ENCODE measurements at regions of chr9 and their contacts with region 1.

Region 1: GRCh38 chr9:37415011-37415719 is 7.3 kb upstream of the GRHPR start:
- DNase-seq: no peak
- ATAC-seq: peak; percentile 50
- H3K4me3 ChIP-seq: no peak overlapping the region
- H3K27ac ChIP-seq: peak overlapping the region; percentile 45
- H3K4me1 ChIP-seq: peaks cover 46% of the 10 kb centered on the region
- H3K27me3 ChIP-seq: no peaks in the 10 kb centered on the region
- CTCF ChIP-seq: peak; percentile 82 to 89 (median 88)
- EP300 ChIP-seq: no peak
- POLR2A ChIP-seq: no peak
- RAD21 ChIP-seq: peak; percentile 80

Region 2: GRCh38 chr9:37066139-37066725 is 348.9 kb before region 1 on chr9:
- CTCF ChIA-PET with region 1: no interaction called
- POLR2A ChIA-PET with region 1: no interaction called
- RAD21 ChIA-PET with region 1: no interaction called
- SMC1A ChIA-PET with region 1: no interaction called
- in situ Hi-C with region 1: no loop called
- intact Hi-C with region 1: no loop called
- DNase-seq: no peak
- ATAC-seq: peak; percentile 93
- H3K4me3 ChIP-seq: no peak overlapping the region
- H3K27ac ChIP-seq: peak overlapping the region; percentile 9; the same call in 1 of the 2 replicates
- H3K4me1 ChIP-seq: peaks cover 13% of the 10 kb centered on the region
- H3K27me3 ChIP-seq: no peaks in the 10 kb centered on the region
- CTCF ChIP-seq: no peak
- EP300 ChIP-seq: no peak
- POLR2A ChIP-seq: no peak
- RAD21 ChIP-seq: no peak

Region 3: GRCh38 chr9:37271679-37272078 is 143.5 kb before region 1 on chr9:
- CTCF ChIA-PET with region 1: no interaction called
- POLR2A ChIA-PET with region 1: no interaction called
- RAD21 ChIA-PET with region 1: no interaction called
- SMC1A ChIA-PET with region 1: no interaction called
- in situ Hi-C with region 1: no loop called
- intact Hi-C with region 1: no loop called
- DNase-seq: no peak
- ATAC-seq: no peak
- H3K4me3 ChIP-seq: no peak overlapping the region
- H3K27ac ChIP-seq: no peak overlapping the region
- H3K4me1 ChIP-seq: no peaks in the 10 kb centered on the region
- H3K27me3 ChIP-seq: no peaks in the 10 kb centered on the region
- CTCF ChIP-seq: no peak
- EP300 ChIP-seq: no peak
- POLR2A ChIP-seq: no peak
- RAD21 ChIP-seq: no peak

Region 4: GRCh38 chr9:37293664-37294524 is 121.3 kb before region 1 on chr9:
- CTCF ChIA-PET with region 1: interaction called, 6 read pairs
- POLR2A ChIA-PET with region 1: no interaction called
- RAD21 ChIA-PET with region 1: interaction called, 4 read pairs
- SMC1A ChIA-PET with region 1: interaction called, 16 read pairs
- in situ Hi-C with region 1: no loop called
- intact Hi-C with region 1: no loop called
- DNase-seq: peak; percentile 91
- ATAC-seq: peak; percentile 73
- H3K4me3 ChIP-seq: no peak overlapping the region
- H3K27ac ChIP-seq: peak overlapping the region; percentile 90
- H3K4me1 ChIP-seq: peaks cover 60% of the 10 kb centered on the region
- H3K27me3 ChIP-seq: no peaks in the 10 kb centered on the region
- CTCF ChIP-seq: no peak
- EP300 ChIP-seq: peak; percentile 95 to 96
- POLR2A ChIP-seq: no peak
- RAD21 ChIP-seq: no peak

Region 5: GRCh38 chr9:37337301-37337890 is 77.8 kb before region 1 on chr9:
- CTCF ChIA-PET with region 1: interaction called, 17 read pairs
- POLR2A ChIA-PET with region 1: interaction called, 4 read pairs
- RAD21 ChIA-PET with region 1: interaction called, 5 read pairs
- SMC1A ChIA-PET with region 1: interaction called, 8 read pairs
- in situ Hi-C with region 1: no loop called
- intact Hi-C with region 1: no loop called
- DNase-seq: no peak
- ATAC-seq: peak; percentile 47
- H3K4me3 ChIP-seq: no peak overlapping the region; the same call in 1 of the 2 replicates
- H3K27ac ChIP-seq: peak overlapping the region; percentile 21
- H3K4me1 ChIP-seq: peaks cover 34% of the 10 kb centered on the region
- H3K27me3 ChIP-seq: no peaks in the 10 kb centered on the region
- CTCF ChIP-seq: no peak
- EP300 ChIP-seq: no peak
- POLR2A ChIP-seq: no peak
- RAD21 ChIP-seq: no peak

Region 6: GRCh38 chr9:37425301-37425752 is 10.2 kb after region 1 on chr9:
- CTCF ChIA-PET with region 1: interaction called, 17 read pairs
- POLR2A ChIA-PET with region 1: interaction called, 5 read pairs
- RAD21 ChIA-PET with region 1: interaction called, 7 read pairs
- SMC1A ChIA-PET with region 1: interaction called, 4 read pairs
- in situ Hi-C with region 1: no loop called
- intact Hi-C with region 1: no loop called
- DNase-seq: no peak
- ATAC-seq: no peak
- H3K4me3 ChIP-seq: no peak overlapping the region; the same call in 1 of the 2 replicates
- H3K27ac ChIP-seq: no peak overlapping the region
- H3K4me1 ChIP-seq: peaks cover 17% of the 10 kb centered on the region
- H3K27me3 ChIP-seq: no peaks in the 10 kb centered on the region
- CTCF ChIP-seq: no peak
- EP300 ChIP-seq: no peak
- POLR2A ChIP-seq: no peak
- RAD21 ChIP-seq: no peak

Region 7: DNA sequence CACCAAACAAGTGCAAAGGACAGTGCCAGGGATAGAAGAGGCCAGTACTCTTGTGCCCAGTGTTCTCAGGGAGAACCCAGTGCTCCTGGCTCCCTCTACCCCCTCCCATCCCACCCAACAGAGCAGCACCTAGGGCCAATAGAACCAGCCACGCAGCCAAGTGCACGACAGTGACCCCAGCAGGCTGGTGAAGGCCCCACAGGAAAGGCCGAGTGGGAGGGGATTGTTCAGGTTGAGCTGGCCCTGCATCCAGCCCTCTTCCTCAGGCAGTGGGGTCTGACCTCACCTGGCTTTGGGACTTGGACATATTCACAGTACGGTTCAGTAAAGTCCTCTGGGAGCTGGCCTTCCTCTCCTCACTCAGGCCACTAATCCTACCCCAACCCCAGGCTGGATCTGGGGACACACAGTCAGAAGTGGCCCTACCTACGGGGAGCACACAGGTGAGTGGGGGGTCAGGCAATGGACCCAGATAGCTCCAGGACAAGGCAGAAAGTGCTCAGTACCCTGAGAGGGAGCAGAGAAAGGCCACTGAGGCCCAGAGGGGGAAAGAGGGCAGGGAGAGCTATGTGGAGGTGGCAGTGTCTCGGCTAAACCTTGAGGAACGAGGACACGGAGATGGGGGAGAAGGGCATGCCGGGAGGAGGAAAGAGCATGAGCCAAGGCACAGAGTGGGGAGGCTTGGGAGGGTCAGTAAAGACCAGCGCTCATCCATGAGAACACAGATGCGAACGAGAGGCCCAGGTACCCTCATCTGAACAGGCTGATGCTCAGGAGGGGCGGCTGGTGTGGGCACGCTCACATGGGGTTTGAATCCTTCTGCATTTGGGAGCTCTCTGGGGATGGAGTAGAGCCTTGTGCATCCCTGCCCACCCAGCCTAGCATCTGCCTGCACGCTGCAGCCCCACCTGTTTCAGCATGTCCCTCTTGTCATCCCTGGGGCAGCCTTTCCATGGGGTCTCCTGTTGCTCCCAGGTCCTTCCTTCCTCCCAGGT is 96.1 kb after region 1 on chr9:
- CTCF ChIA-PET with region 1: interaction called, 10 read pairs
- POLR2A ChIA-PET with region 1: no interaction called
- RAD21 ChIA-PET with region 1: interaction called, 4 read pairs
- SMC1A ChIA-PET with region 1: interaction called, 4 read pairs
- in situ Hi-C with region 1: no loop called
- intact Hi-C with region 1: no loop called
- DNase-seq: no peak
- ATAC-seq: peak; percentile 90
- H3K4me3 ChIP-seq: no peak overlapping the region
- H3K27ac ChIP-seq: no peak overlapping the region
- H3K4me1 ChIP-seq: no peaks in the 10 kb centered on the region
- H3K27me3 ChIP-seq: no peaks in the 10 kb centered on the region
- CTCF ChIP-seq: peak; percentile 26 to 44 (median 35); a peak in 4 of 6 replicates
- EP300 ChIP-seq: no peak
- POLR2A ChIP-seq: peak; percentile 58; the same call in 1 of the 2 replicates
- RAD21 ChIP-seq: 0 out of 2 replicates have a peak, but pooled peaks have one; percentile 27